ENCODE measurements at regions of chr12 and their contacts with region 1.

Region 1: DNA sequence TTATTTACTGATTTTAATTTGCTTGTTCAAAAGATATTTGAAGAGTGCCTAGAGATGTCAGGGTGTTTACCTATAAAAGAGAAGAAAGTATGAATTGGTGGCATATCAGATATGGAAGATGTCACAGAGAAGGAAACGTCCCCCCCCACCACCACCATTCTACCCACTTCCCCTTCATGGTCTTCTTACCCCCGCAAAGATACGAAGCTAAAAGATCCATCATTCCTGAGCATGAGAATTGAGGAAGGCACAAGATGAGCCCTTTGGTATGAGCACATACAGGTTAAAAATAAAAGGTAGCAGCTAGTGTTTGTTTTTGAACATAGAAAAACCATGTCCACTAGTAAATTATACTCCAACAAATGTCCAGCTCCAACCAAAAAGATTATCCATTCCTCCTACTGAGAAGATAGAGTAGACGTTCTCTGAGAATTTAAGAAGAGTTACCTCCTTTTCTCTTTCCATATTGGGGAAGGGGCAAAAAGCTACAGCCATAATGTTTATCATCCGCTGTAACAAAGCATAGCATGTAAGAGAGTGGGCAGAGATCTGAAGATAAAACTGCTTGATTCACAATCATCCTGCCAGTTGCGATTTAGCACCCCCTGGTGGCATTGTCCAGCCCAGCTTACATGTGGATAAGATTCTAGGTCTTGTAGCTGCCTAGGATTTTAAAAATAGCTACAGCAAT is 29.1 kb downstream of the NFYB start:
- DNase-seq: peak; percentile 73 to 85 (median 78)
- ATAC-seq: peak; percentile 82
- H3K4me3 ChIP-seq: no peak overlapping the region
- H3K27ac ChIP-seq: no peak overlapping the region
- H3K4me1 ChIP-seq: peaks cover 19% of the 10 kb centered on the region
- H3K27me3 ChIP-seq: no peaks in the 10 kb centered on the region
- CTCF ChIP-seq: peak; percentile 71 to 90 (median 75)
- POLR2A ChIP-seq: no peak

Region 2: DNA sequence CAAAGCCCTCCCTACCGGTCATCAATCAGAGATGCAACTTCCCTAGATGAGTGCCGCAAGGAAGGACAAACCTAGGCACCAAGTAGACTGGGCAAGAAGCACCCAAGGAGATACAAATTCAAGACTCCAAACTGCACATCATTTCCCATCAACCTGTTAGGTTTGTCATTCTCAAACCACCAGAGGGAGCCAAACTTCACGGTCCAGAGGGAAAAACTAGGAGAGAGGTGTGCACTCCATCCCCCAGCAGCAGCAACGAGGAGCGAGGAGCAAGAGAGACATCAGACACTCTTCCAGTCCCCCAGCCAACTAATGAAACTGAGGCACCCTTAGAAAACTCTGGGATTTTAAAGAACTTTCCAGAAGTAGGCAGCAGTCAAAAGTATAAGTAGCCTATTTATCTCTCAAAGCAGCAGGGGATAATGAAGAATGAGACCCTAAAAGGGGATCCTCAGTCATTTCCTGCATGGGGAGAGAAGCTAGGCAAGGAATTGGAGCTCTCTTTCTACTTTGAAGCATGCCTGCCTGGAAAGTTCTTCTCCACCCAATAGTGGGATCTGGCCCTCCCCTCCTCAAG is 230.9 kb before region 1 on chr12:
- intact Hi-C with region 1: loop called (anchors 10 kb)
- DNase-seq: peak; percentile 53 to 67 (median 59)
- ATAC-seq: peak; percentile 62
- H3K4me3 ChIP-seq: no peak overlapping the region
- H3K27ac ChIP-seq: no peak overlapping the region
- H3K4me1 ChIP-seq: no peaks in the 10 kb centered on the region
- H3K27me3 ChIP-seq: no peaks in the 10 kb centered on the region
- CTCF ChIP-seq: peak; percentile 50 to 71 (median 62)
- POLR2A ChIP-seq: no peak

Region 3: DNA sequence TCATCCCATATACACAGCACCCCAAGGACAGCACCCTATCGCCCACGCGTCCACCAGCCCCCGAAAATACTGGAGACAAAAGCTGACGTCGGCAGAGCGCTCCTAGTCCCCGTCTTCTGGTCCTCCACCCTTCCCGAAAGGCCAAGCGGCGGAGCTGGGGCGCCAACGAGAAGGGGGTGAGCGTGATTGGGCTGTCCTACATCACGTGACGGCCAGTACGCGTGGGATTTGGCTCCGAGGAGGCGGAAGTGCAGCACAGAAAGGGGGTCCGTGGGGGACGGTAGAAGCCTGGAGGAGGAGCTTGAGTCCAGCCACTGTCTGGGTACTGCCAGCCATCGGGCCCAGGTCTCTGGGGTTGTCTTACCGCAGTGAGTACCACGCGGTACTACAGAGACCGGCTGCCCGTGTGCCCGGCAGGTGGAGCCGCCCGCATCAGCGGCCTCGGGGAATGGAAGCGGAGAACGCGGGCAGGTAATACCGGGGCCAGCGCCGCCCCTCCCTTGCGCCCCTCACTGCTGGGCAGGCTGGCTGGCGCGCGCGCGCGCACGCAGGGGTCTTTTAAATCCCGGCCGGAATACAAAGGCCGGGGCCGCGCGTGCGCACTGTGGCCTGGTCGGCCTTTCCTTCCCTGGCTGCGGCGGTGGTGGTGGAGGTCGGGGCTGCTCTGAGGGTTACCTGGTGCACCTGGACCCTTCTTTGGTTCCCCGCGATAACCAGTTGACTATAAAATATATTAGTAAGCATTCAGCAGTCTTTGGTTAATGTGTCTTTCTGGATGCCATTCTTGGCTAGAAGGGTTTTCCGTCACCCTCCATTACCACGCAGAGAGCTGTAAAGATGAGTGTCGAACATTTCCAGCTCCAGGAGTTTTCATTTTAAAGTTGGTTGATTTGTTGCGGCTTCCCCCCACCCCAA is 143.1 kb before region 1 on chr12 and contains the start of gene TDG:
- intact Hi-C with region 1: loop called (anchors 10 kb)
- DNase-seq: peak; percentile 96 to 98 (median 97)
- ATAC-seq: peak; percentile 99
- H3K4me3 ChIP-seq: peak within 1 kb of the TSS; percentile 79
- H3K27ac ChIP-seq: peak within 1 kb of the TSS; percentile 85 to 94 (median 92)
- H3K4me1 ChIP-seq: peaks cover 53% of the 10 kb centered on the region
- H3K27me3 ChIP-seq: no peaks in the 10 kb centered on the region
- CTCF ChIP-seq: peak in 3 of 7 experiments; percentile 25 to 37 (median 26)
- POLR2A ChIP-seq: peak; percentile 75 to 92 (median 90)
- total RNA-seq, gene TDG: 13.2 to 17.5 TPM

Region 4: GRCh38 chr12:104046306-104046705 is 62.6 kb before region 1 on chr12:
- intact Hi-C with region 1: no loop called
- DNase-seq: no peak
- ATAC-seq: no peak
- H3K4me3 ChIP-seq: no peak overlapping the region
- H3K27ac ChIP-seq: no peak overlapping the region
- H3K4me1 ChIP-seq: peaks cover 13% of the 10 kb centered on the region
- H3K27me3 ChIP-seq: no peaks in the 10 kb centered on the region
- CTCF ChIP-seq: no peak
- POLR2A ChIP-seq: no peak

Region 5: GRCh38 chr12:104064031-104064822 is 44.7 kb before region 1 on chr12 and contains the start of gene HCFC2:
- intact Hi-C with region 1: no loop called
- DNase-seq: peak; percentile 90 to 93 (median 90)
- ATAC-seq: peak; percentile 96
- H3K4me3 ChIP-seq: peak within 1 kb of the TSS; percentile 60 to 84
- H3K27ac ChIP-seq: peak within 1 kb of the TSS; percentile 75 to 88 (median 84)
- H3K4me1 ChIP-seq: peaks cover 16% of the 10 kb centered on the region
- H3K27me3 ChIP-seq: no peaks in the 10 kb centered on the region
- CTCF ChIP-seq: no peak
- POLR2A ChIP-seq: peak; percentile 43 to 84 (median 75)
- total RNA-seq, gene HCFC2: 14.5 to 15.8 TPM

Measured in body of pancreas (tissue), 4 donors.